T-cell (primary cell): ENCODE measurements at regions of chr4 and their contacts with region 1.

Region 1: GRCh38 chr4:1693129-1693896 is 9.2 kb upstream of the FAM53A start:
- DNase-seq: peak; percentile 58 to 90 (median 74)
- ATAC-seq: peak; percentile 89 to 97 (median 95)
- H3K4me3 ChIP-seq: no peak overlapping the region
- H3K4me3 Mint-ChIP-seq: no peak overlapping the region
- H3K27ac ChIP-seq: peak overlapping the region; percentile 30
- H3K27ac Mint-ChIP-seq: peak overlapping the region; percentile 52 to 83
- H3K4me1 ChIP-seq: no peaks in the 10 kb centered on the region
- H3K4me1 Mint-ChIP-seq: peaks cover 0 to 4% (median 4%) of the 10 kb centered on the region in 3 donors
- H3K27me3 ChIP-seq: no peaks in the 10 kb centered on the region
- H3K27me3 Mint-ChIP-seq: no peaks in the 10 kb centered on the region

Region 2: DNA sequence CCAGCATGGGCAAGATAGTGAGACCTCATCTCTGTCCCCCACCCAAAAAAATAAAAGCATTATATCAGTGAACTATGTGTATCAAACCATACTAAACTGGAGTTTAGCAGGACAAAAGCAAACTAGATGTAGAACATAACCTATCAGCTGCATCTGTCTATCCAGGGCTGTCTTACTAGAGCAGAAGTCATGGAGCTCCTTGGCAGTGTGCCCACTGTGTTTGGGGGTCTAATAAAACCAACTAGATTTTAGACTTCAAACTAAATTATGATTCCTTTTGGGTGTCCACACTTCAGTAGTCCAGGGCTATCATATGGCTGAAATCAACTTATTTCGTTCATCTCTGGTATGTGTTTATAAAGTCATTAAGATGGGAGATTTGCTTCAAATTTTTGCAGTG is 10.6 kb after region 1 on chr4:
- CTCF ChIA-PET with region 1: interaction called, 6 to 22 read pairs
- POLR2A ChIA-PET with region 1: no interaction called
- DNase-seq: no peak
- ATAC-seq: no peak
- H3K4me3 ChIP-seq: no peak overlapping the region
- H3K4me3 Mint-ChIP-seq: no peak overlapping the region
- H3K27ac ChIP-seq: no peak overlapping the region
- H3K27ac Mint-ChIP-seq: no peak overlapping the region
- H3K4me1 ChIP-seq: peaks cover 0 to 8% of the 10 kb centered on the region in 2 experiments
- H3K4me1 Mint-ChIP-seq: peaks cover 22 to 45% (median 39%) of the 10 kb centered on the region in 3 donors
- H3K27me3 ChIP-seq: no peaks in the 10 kb centered on the region
- H3K27me3 Mint-ChIP-seq: no peaks in the 10 kb centered on the region

Region 3: GRCh38 chr4:1712216-1713002 is 19.1 kb after region 1 on chr4 and contains the start of gene SLBP:
- CTCF ChIA-PET with region 1: interaction called, 6 to 22 read pairs
- POLR2A ChIA-PET with region 1: interaction called in 1 of 2 experiments, 4 read pairs
- DNase-seq: peak; percentile 94 to 99 (median 98)
- ATAC-seq: peak; percentile 85 to 88 (median 87)
- H3K4me3 ChIP-seq: peak within 1 kb of the TSS; percentile 88 to 90
- H3K4me3 Mint-ChIP-seq: peak within 1 kb of the TSS; percentile 96
- H3K27ac ChIP-seq: peak within 1 kb of the TSS; percentile 73
- H3K27ac Mint-ChIP-seq: peak within 1 kb of the TSS; percentile 96
- H3K4me1 ChIP-seq: peaks cover 14 to 65% of the 10 kb centered on the region in 2 experiments
- H3K4me1 Mint-ChIP-seq: peaks cover 49 to 70% (median 65%) of the 10 kb centered on the region in 3 donors
- H3K27me3 ChIP-seq: no peaks in the 10 kb centered on the region
- H3K27me3 Mint-ChIP-seq: no peaks in the 10 kb centered on the region
- total RNA-seq, gene SLBP: 30.1 to 42.3 (median 36.1) TPM

Region 4: DNA sequence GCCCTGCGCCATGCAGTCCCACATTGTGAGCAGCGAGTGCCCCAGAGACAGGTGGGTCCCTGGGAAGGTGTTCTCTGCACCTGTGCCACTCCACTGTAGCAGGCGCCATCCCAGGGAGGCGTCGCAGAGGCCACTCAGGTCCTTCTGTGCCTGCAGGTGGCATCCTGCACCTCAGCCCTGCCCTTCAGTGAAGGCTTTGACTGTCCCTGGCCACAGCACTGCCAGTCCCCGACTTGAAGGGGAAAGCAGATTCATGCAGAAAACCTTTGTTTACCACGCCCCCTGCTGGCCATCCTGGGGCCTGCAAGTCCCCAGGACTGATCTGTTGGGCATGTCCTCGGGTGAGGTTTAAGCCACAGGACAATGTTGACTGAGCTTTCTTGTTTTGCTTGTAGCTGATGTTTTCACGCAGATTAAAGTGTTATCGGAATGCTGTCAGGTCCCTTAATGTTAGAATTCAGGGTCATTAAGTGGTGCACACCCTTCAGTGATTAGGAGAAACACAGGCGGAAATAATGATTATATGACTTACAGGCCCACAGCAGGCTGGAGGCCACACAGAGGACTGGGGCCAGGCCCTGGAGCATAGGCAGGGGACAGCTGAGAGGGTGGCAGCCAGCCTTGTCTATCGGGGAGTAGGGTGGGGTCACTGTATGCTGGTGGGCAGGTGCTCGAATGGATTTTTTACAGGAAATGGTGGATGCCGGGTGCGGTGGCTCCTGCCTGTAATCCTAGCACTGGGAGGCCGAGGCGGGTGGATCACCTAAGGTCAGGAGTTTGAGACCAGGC is 33.0 kb after region 1 on chr4:
- CTCF ChIA-PET with region 1: interaction called, 28 to 75 read pairs
- POLR2A ChIA-PET with region 1: no interaction called
- DNase-seq: peak; percentile 67 to 93 (median 86)
- ATAC-seq: peak; percentile 36 to 44 (median 38)
- H3K4me3 ChIP-seq: no peak overlapping the region
- H3K4me3 Mint-ChIP-seq: peak overlapping the region; percentile 43 to 86 (median 50)
- H3K27ac ChIP-seq: no peak overlapping the region
- H3K27ac Mint-ChIP-seq: peak overlapping the region; percentile 66 to 71
- H3K4me1 ChIP-seq: peaks cover 20 to 93% of the 10 kb centered on the region in 2 experiments
- H3K4me1 Mint-ChIP-seq: peaks cover 65 to 77% (median 71%) of the 10 kb centered on the region in 3 donors
- H3K27me3 ChIP-seq: no peaks in the 10 kb centered on the region
- H3K27me3 Mint-ChIP-seq: no peaks in the 10 kb centered on the region

Region 5: DNA sequence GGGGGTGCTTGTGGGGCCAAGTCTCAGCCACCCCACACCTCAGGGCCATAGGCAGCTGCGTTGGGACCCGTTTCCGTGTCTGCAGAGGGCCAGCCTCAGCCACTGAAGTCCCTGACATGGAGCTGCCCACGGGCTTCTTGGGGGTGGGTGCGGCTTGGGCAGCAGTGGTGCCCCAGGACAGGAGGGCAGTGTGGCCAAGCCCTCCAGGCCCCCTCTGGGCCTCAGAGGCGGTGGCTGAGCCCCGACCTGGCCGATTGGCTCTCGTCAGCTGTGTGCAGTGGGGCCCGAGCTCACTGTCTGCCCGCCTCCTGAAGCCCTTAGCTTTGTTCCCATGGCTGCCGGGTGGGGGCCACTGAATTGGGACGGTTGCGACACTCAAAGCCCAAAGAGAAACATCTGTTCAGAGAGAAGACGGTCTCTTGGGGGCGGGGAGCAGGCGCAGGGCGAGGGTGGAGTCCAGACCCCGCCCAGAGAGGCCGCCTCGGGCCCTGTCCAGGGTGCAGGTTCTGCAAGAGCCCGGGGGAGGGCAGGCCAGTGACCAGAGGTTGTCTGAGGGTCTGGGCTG is 108.9 kb after region 1 on chr4:
- CTCF ChIA-PET with region 1: no interaction called
- POLR2A ChIA-PET with region 1: no interaction called
- DNase-seq: no peak
- ATAC-seq: no peak
- H3K4me3 ChIP-seq: no peak overlapping the region
- H3K4me3 Mint-ChIP-seq: no peak overlapping the region
- H3K27ac ChIP-seq: no peak overlapping the region
- H3K27ac Mint-ChIP-seq: no peak overlapping the region
- H3K4me1 ChIP-seq: no peaks in the 10 kb centered on the region
- H3K4me1 Mint-ChIP-seq: no peaks in the 10 kb centered on the region
- H3K27me3 ChIP-seq: peaks cover 0 to 32% of the 10 kb centered on the region in 2 experiments
- H3K27me3 Mint-ChIP-seq: peaks cover 5 to 15% of the 10 kb centered on the region in 2 donors

Region 6: DNA sequence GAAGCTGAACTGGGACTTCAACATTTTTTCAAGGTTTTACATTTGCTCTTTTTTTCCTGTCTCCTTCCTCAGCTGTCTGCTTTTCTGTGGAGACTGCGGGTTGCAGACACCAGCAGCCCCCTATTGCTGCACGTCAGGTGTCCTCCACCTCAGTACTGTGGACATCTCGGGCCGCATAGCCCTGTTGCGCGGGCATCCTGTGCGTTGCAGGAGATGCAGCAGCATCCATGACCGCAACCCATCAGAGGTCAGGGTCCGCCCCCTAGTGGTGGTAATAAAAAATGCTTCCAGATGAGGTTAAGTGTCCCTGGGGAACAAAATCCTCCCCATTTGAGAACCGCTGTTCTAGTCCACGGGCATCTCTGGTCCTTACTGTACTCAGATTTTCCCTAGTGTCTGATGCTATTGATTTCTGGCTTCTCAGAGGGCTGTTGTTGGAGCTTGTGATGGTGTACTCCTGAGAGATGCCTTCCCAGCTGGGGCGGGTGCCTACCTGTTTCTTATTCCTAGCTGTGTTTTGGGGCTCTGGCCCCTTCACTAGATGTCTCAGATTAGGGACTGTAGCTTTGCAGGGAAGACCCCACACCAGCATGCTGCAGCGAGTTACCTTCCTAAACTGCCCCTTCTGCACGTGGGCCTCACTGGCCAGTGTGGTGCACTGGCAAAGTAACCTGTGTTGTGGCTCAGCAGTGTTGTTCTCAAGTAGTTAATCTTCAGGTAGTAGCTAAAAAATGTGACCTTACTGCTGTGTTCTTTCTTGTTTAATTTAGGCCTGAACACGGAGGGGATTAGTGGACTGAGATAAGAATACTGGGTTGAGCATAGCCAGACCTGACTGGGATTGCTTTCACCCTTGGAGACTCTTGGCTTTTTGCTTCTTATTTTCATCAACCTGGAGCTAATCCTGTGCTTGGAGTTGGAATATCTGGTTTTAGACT is 206.1 kb after region 1 on chr4:
- CTCF ChIA-PET with region 1: interaction called in 1 of 2 experiments, 13 read pairs
- POLR2A ChIA-PET with region 1: interaction called in 1 of 2 experiments, 4 read pairs
- DNase-seq: peak; percentile 46 to 88 (median 62)
- ATAC-seq: peak; percentile 94 to 96 (median 95)
- H3K4me3 ChIP-seq: no peak overlapping the region
- H3K4me3 Mint-ChIP-seq: no peak overlapping the region
- H3K27ac ChIP-seq: no peak overlapping the region
- H3K27ac Mint-ChIP-seq: peak overlapping the region in 1 of 2 donors; percentile 81
- H3K4me1 ChIP-seq: peaks cover 0 to 5% of the 10 kb centered on the region in 2 experiments
- H3K4me1 Mint-ChIP-seq: peaks cover 6 to 18% (median 14%) of the 10 kb centered on the region in 3 donors
- H3K27me3 ChIP-seq: no peaks in the 10 kb centered on the region
- H3K27me3 Mint-ChIP-seq: no peaks in the 10 kb centered on the region